Right ventricle myocardium inferior (tissue), 1 donor: ENCODE measurements at regions of chr13 and their contacts with region 1.

Region 1: DNA sequence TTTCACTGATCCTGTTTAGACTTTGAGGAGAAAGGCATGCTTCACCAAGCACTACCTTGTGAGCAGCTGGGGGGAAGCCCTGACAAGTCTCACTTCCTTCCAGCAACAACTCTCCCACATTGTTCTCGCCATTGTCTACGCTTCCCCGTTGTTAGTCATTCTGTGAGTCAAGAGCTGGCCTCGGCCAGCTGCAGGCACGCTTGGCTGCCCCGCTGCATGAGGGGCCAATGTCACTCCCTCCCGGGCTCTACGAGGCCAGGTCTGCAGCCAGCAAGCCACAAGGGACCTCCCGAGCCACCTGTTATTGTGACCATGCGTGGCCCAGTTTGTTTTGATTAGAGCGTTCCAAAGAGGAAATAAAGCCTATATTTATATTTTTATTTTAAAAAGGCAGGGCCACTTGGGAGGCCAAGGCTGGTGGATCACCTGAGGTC is 220.9 kb downstream of the FOXO1 start:
- DNase-seq: peak; percentile 77
- ATAC-seq: peak; percentile 24

Region 2: GRCh38 chr13:40172149-40172591 is 273.4 kb before region 1 on chr13:
- intact Hi-C with region 1: loop called (anchors 5 kb)
- DNase-seq: no peak
- ATAC-seq: peak; percentile 4

Region 3: DNA sequence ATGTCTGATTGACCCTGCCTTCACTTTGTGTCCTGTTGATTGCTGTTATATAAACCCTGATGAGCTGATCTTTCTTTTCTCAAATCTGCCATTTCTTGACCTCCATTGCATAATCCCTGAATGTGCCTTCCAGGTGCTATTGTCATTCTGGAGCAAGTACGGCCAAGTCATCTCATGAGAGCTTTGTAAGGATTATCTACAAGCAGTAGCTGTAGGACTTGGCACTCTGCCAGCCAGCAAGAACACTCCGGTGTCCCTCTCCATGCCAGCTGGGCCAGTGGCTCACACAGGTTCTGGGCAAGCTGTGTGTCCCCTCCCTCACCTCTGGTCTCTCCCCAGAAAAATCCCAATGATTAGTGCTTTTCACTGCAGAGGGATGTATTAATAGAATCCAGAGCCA is 127.2 kb before region 1 on chr13:
- intact Hi-C with region 1: loop called (anchors 5 kb)
- DNase-seq: peak; percentile 70
- ATAC-seq: peak; percentile 50

Region 4: GRCh38 chr13:40477623-40478608 is 32.3 kb after region 1 on chr13:
- intact Hi-C with region 1: loop called (anchors 5 kb)
- DNase-seq: no peak
- ATAC-seq: peak; percentile 86